CD4-positive, alpha-beta memory T cell (primary cell): ENCODE measurements at regions of chr4 and their contacts with region 1.

Region 1: GRCh38 chr4:21134994-21135393 is 434.7 kb downstream of the PACRGL start:
- DNase-seq: peak in 4 of 5 donors; percentile 21 to 32 (median 28)
- H3K4me3 ChIP-seq: no peak overlapping the region
- H3K4me3 Mint-ChIP-seq: no peak overlapping the region
- H3K27ac ChIP-seq: no peak overlapping the region
- H3K27ac Mint-ChIP-seq: no peak overlapping the region
- H3K4me1 ChIP-seq: no peaks in the 10 kb centered on the region
- H3K4me1 Mint-ChIP-seq: no peaks in the 10 kb centered on the region
- H3K27me3 ChIP-seq: no peaks in the 10 kb centered on the region
- H3K27me3 Mint-ChIP-seq: no peaks in the 10 kb centered on the region

Region 2: GRCh38 chr4:20422398-20422797 is 712.6 kb before region 1 on chr4:
- CTCF ChIA-PET with region 1: no interaction called
- POLR2A ChIA-PET with region 1: no interaction called
- intact Hi-C with region 1: loop called (anchors 10 kb)
- DNase-seq: peak; percentile 11 to 44 (median 15)
- H3K4me3 ChIP-seq: no peak overlapping the region
- H3K4me3 Mint-ChIP-seq: no peak overlapping the region
- H3K27ac ChIP-seq: no peak overlapping the region
- H3K27ac Mint-ChIP-seq: no peak overlapping the region
- H3K4me1 ChIP-seq: no peaks in the 10 kb centered on the region
- H3K4me1 Mint-ChIP-seq: peaks cover 0 to 6% (median 2%) of the 10 kb centered on the region in 4 donors
- H3K27me3 ChIP-seq: no peaks in the 10 kb centered on the region
- H3K27me3 Mint-ChIP-seq: peaks cover 0 to 2% of the 10 kb centered on the region in 2 donors

Region 3: GRCh38 chr4:20773144-20773997 is 361.6 kb before region 1 on chr4:
- CTCF ChIA-PET with region 1: interaction called, 42 read pairs
- POLR2A ChIA-PET with region 1: no interaction called
- intact Hi-C with region 1: no loop called
- DNase-seq: peak; percentile 10 to 35 (median 28)
- H3K4me3 ChIP-seq: no peak overlapping the region
- H3K4me3 Mint-ChIP-seq: peak overlapping the region in 4 of 8 donors; percentile 46 to 66 (median 58)
- H3K27ac ChIP-seq: no peak overlapping the region
- H3K27ac Mint-ChIP-seq: peak overlapping the region in 2 of 7 donors; percentile 29 to 77
- H3K4me1 ChIP-seq: peaks cover 3% of the 10 kb centered on the region
- H3K4me1 Mint-ChIP-seq: peaks cover 0 to 5% (median 2%) of the 10 kb centered on the region in 4 donors
- H3K27me3 ChIP-seq: no peaks in the 10 kb centered on the region
- H3K27me3 Mint-ChIP-seq: no peaks in the 10 kb centered on the region